ENCODE measurements at regions of chr7 and their contacts with region 1.

Region 1: DNA sequence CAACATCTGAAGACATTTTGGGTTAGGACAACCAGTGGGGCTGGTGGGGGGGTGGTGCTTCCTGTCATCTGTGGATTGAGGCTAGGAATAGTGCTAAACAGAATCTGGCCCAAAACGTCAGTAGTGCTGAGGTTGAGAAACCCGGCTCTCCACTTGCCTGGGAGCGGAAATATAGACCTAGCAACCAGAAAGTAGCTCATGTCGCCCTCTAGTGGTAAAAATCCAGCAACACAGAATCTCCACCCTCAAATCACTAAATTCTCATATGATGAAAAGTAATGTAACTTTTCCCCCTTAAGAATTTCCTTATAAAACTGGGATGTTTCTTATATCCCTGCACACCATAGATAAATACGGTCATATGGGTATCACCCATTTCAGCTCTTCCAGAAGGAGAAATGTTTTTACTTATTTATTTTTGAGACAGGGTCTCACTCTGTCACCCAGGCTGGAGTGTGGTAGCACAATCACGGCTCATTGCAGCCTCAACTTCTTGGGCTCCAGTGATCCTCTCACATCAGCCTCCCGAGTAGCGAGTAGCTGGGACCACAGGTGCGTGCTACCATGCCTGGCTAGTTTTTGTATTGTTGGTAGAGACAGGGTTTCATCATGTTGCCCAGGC is 34.4 kb downstream of the ZC3HAV1 start:
- DNase-seq: peak; percentile 91
- H3K4me3 Mint-ChIP-seq: peak overlapping the region; percentile 59
- H3K27ac Mint-ChIP-seq: peak overlapping the region; percentile 73
- H3K4me1 Mint-ChIP-seq: peaks cover 55% of the 10 kb centered on the region
- H3K27me3 Mint-ChIP-seq: no peaks in the 10 kb centered on the region

Region 2: DNA sequence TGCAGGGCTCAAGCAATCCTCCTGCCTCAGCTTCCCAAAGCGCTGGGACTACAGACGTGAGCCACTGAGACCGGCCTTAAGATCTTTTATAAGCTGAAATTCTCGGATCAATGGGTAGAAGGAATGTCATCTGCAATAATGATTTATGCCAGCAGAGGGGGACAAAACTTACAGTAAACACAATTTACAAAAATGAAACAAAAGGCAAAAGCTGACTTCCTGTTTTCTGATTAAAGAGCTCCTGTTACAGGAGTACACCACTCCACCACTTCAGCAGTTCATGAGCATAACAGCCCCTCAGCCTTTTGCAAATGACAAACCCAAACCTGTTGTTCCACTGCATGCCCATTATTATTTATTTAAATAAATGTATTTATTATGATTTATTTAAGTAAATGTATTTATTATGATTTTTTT is 188.6 kb before region 1 on chr7:
- intact Hi-C with region 1: loop called (anchors 1 kb)
- DNase-seq: peak; percentile 90
- H3K4me3 Mint-ChIP-seq: no peak overlapping the region
- H3K27ac Mint-ChIP-seq: peak overlapping the region; percentile 43
- H3K4me1 Mint-ChIP-seq: peaks cover 22% of the 10 kb centered on the region
- H3K27me3 Mint-ChIP-seq: peaks cover 8% of the 10 kb centered on the region

Region 3: GRCh38 chr7:139016931-139017511 is 58.1 kb before region 1 on chr7:
- intact Hi-C with region 1: loop called (anchors 1 kb)
- DNase-seq: peak; percentile 89
- H3K4me3 Mint-ChIP-seq: no peak overlapping the region
- H3K27ac Mint-ChIP-seq: no peak overlapping the region
- H3K4me1 Mint-ChIP-seq: peaks cover 7% of the 10 kb centered on the region
- H3K27me3 Mint-ChIP-seq: peaks cover 17% of the 10 kb centered on the region

Region 4: DNA sequence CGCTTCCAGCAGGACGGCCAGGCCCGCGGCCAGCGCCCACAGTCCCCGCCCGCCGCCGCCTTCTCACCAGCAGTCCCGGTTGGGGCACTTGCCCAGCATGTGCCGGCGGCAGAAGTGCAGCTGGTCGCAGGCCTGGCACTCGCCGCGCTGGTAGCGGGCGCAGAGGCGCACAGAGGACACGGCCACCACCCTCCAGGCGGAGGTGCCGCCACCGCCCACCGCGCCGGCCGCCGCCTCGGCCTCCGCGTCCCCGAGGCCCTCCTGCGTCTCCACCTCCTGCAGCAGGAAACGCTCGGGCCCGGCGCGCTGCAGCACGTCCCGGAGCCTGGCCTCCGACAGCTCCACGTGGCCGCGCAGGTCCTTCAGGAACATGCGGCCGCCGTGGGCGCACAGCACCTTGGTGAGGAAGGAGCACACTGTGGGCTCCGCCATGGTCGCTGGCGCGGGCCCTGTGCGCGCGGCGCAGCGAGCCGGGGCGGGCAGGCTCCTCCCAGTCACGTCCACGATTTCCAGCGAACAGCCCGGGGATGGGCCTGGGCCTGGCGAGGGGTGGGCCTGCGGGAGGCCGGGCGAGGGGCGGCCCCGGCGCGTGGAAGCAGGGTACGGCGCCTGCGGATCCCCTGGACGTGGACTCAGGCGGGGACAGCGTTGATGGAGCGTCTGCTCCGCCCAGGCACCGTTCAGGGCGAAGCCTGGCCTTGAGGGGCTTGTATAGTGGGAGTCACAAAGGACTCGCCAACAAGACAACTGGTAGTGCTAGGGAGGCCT is 39.4 kb before region 1 on chr7 and contains the start of gene ZC3HAV1L:
- intact Hi-C with region 1: loop called (anchors 1 kb)
- DNase-seq: peak; percentile 90
- H3K4me3 Mint-ChIP-seq: peak within 1 kb of the TSS; percentile 89
- H3K27ac Mint-ChIP-seq: peak within 1 kb of the TSS; percentile 90
- H3K4me1 Mint-ChIP-seq: peaks cover 39% of the 10 kb centered on the region
- H3K27me3 Mint-ChIP-seq: peaks cover 3% of the 10 kb centered on the region
- total RNA-seq, gene ZC3HAV1L: 36.5 and 38.5 TPM in 2 replicates

Region 5: DNA sequence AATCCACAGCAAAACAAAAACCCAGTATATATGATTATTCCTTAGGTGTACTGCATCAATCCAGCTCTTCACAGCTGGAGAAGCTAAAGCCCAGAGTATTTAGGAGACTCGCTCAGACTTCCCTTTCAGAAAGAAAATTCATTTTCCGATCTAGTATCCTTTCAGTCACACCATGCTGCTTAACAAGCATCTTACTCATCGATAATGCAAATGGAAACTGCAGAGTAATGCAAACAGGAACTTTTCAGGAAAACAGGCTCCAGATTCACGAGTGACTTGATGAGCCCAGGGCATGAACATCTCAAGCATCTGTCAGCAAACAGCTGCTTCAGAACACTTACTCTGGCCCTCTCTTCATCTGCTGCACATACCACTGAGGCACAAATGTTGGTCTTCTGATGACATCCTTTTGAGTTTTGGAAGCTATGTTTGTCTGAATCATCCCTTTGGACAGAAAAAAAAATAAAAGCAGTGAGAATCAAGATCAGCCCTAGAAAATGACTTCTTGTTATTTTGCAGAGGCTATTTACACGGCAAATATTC is 14.4 kb before region 1 on chr7:
- intact Hi-C with region 1: loop called (anchors 2 kb)
- DNase-seq: no peak
- H3K4me3 Mint-ChIP-seq: peak overlapping the region; percentile 28
- H3K27ac Mint-ChIP-seq: peak overlapping the region; percentile 74
- H3K4me1 Mint-ChIP-seq: peaks cover 61% of the 10 kb centered on the region
- H3K27me3 Mint-ChIP-seq: no peaks in the 10 kb centered on the region

Region 6: GRCh38 chr7:139095194-139095659 is 20.1 kb after region 1 on chr7:
- intact Hi-C with region 1: loop called (anchors 1 kb)
- DNase-seq: peak; percentile 96
- H3K4me3 Mint-ChIP-seq: peak overlapping the region; percentile 82
- H3K27ac Mint-ChIP-seq: peak overlapping the region; percentile 88
- H3K4me1 Mint-ChIP-seq: peaks cover 76% of the 10 kb centered on the region
- H3K27me3 Mint-ChIP-seq: no peaks in the 10 kb centered on the region

Region 7: GRCh38 chr7:139203992-139204391 is 128.8 kb after region 1 on chr7:
- intact Hi-C with region 1: no loop called
- DNase-seq: no peak
- H3K4me3 Mint-ChIP-seq: no peak overlapping the region
- H3K27ac Mint-ChIP-seq: no peak overlapping the region
- H3K4me1 Mint-ChIP-seq: no peaks in the 10 kb centered on the region
- H3K27me3 Mint-ChIP-seq: peaks cover 16% of the 10 kb centered on the region